ENCODE measurements at regions of chr2 and their contacts with region 1.

Region 1: DNA sequence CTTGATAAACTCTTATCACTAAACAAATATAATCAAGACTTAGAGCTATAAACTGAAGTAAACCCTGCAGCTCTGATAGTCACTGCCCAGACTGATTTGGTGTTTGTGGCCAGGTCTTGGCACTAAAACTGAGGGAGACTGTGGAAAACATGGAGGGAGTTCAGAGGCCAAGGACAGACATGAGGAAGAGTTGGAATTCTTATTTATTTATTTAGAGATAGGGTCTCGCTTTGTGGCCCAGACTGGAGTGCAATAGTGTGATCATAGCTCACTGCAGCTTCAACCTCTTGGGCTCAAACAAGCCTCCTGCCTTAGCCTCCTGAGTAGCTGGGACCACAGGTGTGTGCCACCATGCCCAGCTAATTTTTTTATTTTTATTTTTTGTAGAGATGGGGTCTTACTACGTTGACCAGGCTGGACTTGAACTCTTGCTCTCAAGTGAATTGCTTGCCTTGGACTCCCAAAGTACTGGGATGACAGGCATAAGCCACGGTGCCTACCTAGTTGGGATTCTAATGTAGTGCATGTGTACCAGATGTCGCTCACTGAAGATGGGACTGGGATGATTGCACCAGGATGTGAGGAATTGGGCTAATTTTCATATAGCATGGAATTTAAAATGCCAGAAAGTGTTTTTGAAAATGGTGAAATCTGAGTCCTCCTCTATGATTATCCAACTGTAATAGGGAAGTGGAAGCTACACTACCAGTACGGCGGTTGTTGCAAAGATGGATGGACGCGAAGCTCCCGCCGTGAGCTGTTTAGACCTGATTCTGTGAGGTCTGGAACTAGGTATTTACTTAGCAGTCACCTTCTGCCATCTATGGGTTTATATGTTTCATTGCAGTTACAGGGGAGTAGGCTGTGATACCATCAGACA is 52.7 kb upstream of the CTLA4 start:
- DNase-seq: peak in 4 of 5 donors; percentile 41 to 59 (median 44)
- ATAC-seq: peak; percentile 79 to 89 (median 85)
- H3K4me3 ChIP-seq: peak overlapping the region in 4 of 12 donors; percentile 20 to 36 (median 22)
- H3K27ac ChIP-seq: peak overlapping the region in 6 of 12 donors; percentile 4 to 67 (median 22)
- H3K4me1 ChIP-seq: peaks cover 0 to 61% (median 11%) of the 10 kb centered on the region in 12 donors
- H3K27me3 ChIP-seq: no peaks in the 10 kb centered on the region
- CTCF ChIP-seq: peak; percentile 69 to 89 (median 80)
- POLR2A ChIP-seq: no peak

Region 2: DNA sequence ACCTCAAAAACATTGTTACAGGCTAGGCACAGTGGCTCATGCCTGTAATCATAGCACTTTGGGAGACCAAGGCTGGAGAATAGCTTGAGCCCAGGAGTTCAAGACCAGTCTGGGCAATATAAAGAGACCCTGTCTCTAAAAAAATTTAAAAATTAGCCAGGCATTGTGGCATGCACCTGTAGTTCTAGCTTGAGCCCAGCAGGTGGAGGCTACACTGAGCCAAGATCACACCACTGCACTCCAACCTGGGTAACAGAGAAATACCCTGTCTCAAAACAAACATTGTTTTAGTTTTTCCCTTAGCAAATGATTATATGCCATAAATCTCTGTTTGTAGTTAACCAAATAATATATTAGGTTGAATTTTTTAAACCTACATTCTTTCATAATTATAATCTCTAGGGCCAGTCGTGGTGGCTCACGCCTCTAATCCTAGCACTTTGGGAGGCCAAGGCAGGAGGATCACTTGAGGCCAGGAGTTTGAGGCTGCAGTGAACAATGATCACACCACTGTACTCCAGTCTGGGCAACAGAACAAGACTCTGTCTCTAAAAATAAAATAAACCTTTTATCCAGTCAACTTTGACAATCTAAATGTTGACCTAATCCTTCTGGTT is 589.4 kb before region 1 on chr2:
- intact Hi-C with region 1: loop called in 5 of 10 experiments (anchors 5 to 10 kb)
- DNase-seq: no peak
- ATAC-seq: peak in 2 of 4 donors; percentile 34 to 45
- H3K4me3 ChIP-seq: no peak overlapping the region
- H3K27ac ChIP-seq: no peak overlapping the region
- H3K4me1 ChIP-seq: no peaks in the 10 kb centered on the region
- H3K27me3 ChIP-seq: no peaks in the 10 kb centered on the region
- CTCF ChIP-seq: peak; percentile 42 to 66 (median 54)
- POLR2A ChIP-seq: no peak

Region 3: GRCh38 chr2:203246646-203247045 is 568.3 kb before region 1 on chr2:
- intact Hi-C with region 1: no loop called
- DNase-seq: no peak
- ATAC-seq: no peak
- H3K4me3 ChIP-seq: no peak overlapping the region
- H3K27ac ChIP-seq: no peak overlapping the region
- H3K4me1 ChIP-seq: no peaks in the 10 kb centered on the region
- H3K27me3 ChIP-seq: no peaks in the 10 kb centered on the region
- CTCF ChIP-seq: no peak
- POLR2A ChIP-seq: no peak

Region 4: GRCh38 chr2:203484266-203485112 is 330.4 kb before region 1 on chr2:
- intact Hi-C with region 1: loop called in 9 of 10 experiments (anchors 2 to 10 kb)
- DNase-seq: peak in 2 of 5 donors; percentile 29 to 32
- ATAC-seq: peak; percentile 63 to 91 (median 81)
- H3K4me3 ChIP-seq: no peak overlapping the region
- H3K27ac ChIP-seq: no peak overlapping the region
- H3K4me1 ChIP-seq: peaks cover 0 to 11% (median 0%) of the 10 kb centered on the region in 12 donors
- H3K27me3 ChIP-seq: no peaks in the 10 kb centered on the region
- CTCF ChIP-seq: peak; percentile 48 to 73 (median 63)
- POLR2A ChIP-seq: no peak

Region 5: DNA sequence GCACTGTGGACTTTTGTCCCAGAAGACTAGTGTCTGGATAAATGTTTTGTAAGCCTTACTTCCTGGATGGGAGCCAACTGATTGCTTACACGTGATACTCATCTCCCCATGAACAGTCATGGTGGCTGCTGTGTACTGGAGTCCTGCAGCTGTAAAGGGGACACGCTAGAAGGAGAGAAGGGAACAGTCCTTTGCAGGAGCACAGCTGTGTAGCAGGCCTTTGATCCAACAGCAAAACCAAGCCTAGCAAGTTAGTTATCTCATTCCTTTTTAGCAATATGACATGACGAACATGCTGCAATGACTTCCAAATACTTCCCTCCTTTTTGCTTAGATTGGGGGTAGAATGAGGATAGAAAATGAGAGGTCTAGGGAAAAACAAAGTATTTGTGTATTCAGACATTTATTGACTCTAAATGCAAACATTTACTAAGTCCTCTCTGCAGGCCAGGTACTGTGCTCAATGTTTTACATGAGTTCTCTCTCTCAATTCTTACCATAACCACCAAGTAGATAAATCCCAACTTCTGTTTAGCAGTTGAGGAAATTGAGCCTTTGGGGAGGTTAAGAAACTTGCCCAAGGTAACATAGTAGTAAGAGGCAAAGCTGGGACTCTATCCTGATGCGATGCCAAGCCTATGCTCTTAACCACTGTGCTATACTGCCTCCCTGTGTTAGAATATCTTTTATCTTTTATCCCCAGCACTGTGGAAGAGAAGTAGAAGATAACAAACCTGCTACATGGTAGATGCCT is 163.9 kb before region 1 on chr2:
- intact Hi-C with region 1: loop called in 2 of 10 experiments (anchors 5 to 10 kb)
- DNase-seq: peak in 1 of 5 donors; percentile 23
- ATAC-seq: peak; percentile 71 to 86 (median 80)
- H3K4me3 ChIP-seq: no peak overlapping the region
- H3K27ac ChIP-seq: peak overlapping the region in 11 of 12 donors; percentile 30 to 75 (median 56)
- H3K4me1 ChIP-seq: peaks cover 0 to 37% (median 23%) of the 10 kb centered on the region in 12 donors
- H3K27me3 ChIP-seq: no peaks in the 10 kb centered on the region
- CTCF ChIP-seq: peak in 10 of 12 donors; percentile 22 to 59 (median 38)
- POLR2A ChIP-seq: no peak

Region 6: DNA sequence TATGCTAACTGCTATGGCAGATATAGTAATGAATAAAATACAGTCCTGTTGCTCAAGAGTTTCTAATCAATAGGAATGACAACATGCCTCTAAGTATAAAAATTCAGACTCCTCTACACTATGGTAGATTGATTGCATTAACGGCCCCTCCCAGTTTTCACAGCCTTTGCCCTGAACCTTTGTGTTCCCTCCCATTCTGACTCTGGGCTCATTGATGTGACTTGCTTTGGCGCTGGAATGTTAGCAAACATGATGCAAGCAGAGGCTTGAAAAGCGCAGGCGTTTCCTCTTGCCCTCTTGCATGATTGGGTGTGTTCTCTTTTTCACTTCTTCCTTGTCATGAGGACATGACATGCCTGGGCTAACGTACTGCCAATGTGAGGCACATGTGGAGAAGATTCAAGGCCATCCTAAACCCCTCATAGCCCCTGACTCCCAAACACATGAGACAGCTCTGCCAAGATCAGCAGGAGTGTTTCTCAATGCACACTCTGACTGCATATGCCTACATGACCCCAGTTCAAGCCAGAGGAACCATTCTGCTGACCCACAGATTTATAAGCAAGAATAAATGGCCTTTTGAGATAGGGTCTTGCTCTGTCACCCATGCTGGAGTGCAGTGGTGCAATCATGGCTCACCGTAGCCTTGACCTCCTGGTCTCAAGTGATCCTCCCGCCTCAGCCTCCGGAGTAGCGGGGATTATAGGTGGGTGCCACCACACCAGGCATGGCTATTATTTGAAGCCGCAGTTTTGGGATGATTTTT is 158.2 kb before region 1 on chr2:
- intact Hi-C with region 1: loop called in 2 of 10 experiments (anchors 5 to 10 kb)
- DNase-seq: peak in 4 of 5 donors; percentile 38 to 52 (median 45)
- ATAC-seq: peak; percentile 62 to 87 (median 84)
- H3K4me3 ChIP-seq: no peak overlapping the region
- H3K27ac ChIP-seq: peak overlapping the region in 6 of 12 donors; percentile 4 to 72 (median 27)
- H3K4me1 ChIP-seq: peaks cover 0 to 46% (median under 1%) of the 10 kb centered on the region in 12 donors
- H3K27me3 ChIP-seq: no peaks in the 10 kb centered on the region
- CTCF ChIP-seq: no peak
- POLR2A ChIP-seq: no peak

Measured in heart left ventricle (tissue), 16 donors.